Motor neuron (in vitro differentiated cells): ENCODE measurements at regions of chr4 and their contacts with region 1.

Region 1: GRCh38 chr4:86908251-86908657 is 16.0 kb upstream of the C4orf36 start:
- ATAC-seq: no peak
- H3K4me3 ChIP-seq: no peak overlapping the region
- H3K27ac ChIP-seq: no peak overlapping the region
- H3K4me1 ChIP-seq: no peaks in the 10 kb centered on the region

Region 2: GRCh38 chr4:86497980-86498862 is 410.0 kb before region 1 on chr4:
- in situ Hi-C with region 1: loop called in 1 of 9 experiments (anchors 25 kb)
- ATAC-seq: peak; percentile 79 to 95 (median 86)
- H3K4me3 ChIP-seq: no peak overlapping the region
- H3K27ac ChIP-seq: no peak overlapping the region
- H3K4me1 ChIP-seq: no peaks in the 10 kb centered on the region